KBM-7 (cell line): ENCODE measurements at regions of chr2 and their contacts with region 1.

Region 1: DNA sequence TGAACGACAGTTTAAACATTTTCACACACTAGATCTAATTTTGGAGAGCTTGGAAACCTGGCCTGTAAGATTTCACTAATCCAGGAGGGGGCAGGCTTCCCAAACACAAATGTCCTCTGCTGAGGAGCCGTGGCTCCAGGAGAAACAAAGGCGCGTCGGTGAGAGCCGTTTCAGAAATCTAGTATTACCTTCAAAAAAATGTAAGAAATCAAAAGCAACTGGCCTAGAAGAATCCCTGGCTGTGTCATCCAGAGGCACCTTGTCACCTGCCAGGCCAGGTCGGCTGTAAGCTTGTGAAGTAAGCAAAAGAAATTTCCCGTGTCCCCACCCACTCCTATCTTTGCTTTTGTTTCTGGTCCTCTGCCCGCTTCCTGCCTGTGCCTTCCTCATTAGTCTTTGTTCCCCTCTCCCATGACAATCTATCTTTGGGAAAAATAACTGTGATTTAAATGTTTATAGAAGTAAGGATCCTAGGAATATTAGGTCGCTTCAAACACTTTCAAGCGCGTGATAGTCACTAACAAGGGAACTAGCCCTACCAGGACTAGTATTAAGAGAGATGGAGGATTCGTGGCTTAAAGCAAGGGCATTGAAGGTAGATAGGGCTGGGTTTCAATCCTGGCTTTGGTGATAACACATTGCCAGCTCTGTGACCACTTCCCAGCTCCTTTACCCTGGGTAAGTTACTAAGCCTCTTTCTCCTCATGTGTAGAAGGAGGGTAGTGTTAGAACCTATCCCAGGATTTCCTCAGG is 99.5 kb upstream of the STK39 start:
- DNase-seq: peak; percentile 87

Region 2: DNA sequence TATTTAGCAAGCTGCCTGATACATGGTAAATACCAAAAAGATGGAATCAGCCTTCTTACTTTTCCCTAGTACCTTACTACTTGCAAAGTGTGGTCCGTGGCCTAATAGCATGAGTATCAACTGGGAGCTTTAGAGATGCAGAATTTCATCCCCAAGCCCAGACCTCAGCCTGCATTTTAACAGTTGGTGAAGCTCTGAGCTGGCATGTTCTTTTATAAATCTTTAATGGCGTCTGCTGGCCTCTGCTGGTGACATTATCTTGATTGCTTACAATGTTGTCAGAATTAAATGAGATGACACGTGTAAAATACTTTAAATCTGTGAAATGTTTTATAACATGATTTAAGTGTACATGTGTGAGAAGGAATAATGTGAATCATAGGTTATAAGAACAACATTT is 340.4 kb after region 1 on chr2:
- in situ Hi-C with region 1: loop called (anchors 25 kb)
- DNase-seq: peak; percentile 27